ENCODE measurements at regions of chr12 and their contacts with region 1.

Region 1: DNA sequence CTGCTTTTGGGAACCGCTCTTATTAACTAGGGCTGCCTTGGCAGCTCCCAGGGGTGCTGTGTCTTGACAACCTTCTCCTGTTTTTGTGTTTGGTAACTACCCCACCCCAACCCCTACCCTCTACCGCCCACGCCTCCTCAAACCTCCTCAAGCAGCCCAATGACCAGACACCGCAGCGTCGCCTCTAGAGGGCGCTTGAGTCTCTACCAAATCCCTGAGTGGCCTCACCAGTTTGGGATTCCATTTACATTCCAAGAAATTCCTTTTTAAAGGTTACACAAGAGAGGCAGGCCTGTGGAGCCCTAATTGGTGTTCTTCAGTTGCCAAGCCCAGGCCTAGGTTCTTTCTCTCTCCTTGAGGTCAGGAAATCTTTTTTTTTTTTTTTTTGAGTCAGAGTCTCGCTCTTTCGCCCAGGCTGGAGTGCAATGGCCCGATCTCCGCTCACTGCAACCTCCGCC is 72.3 kb upstream of the USP44 start:
- DNase-seq: peak; percentile 84
- H3K4me3 ChIP-seq: no peak overlapping the region
- H3K27ac ChIP-seq: no peak overlapping the region
- H3K4me1 ChIP-seq: peaks cover 19% of the 10 kb centered on the region
- H3K27me3 ChIP-seq: no peaks in the 10 kb centered on the region
- CTCF ChIP-seq: peak; percentile 45 to 61 (median 57)
- POLR2A ChIP-seq: no peak

Region 2: GRCh38 chr12:95674631-95675030 is 51.0 kb after region 1 on chr12:
- intact Hi-C with region 1: no loop called
- DNase-seq: no peak
- H3K4me3 ChIP-seq: no peak overlapping the region
- H3K27ac ChIP-seq: no peak overlapping the region
- H3K4me1 ChIP-seq: peaks cover 10% of the 10 kb centered on the region
- H3K27me3 ChIP-seq: no peaks in the 10 kb centered on the region
- CTCF ChIP-seq: no peak
- POLR2A ChIP-seq: no peak

Region 3: DNA sequence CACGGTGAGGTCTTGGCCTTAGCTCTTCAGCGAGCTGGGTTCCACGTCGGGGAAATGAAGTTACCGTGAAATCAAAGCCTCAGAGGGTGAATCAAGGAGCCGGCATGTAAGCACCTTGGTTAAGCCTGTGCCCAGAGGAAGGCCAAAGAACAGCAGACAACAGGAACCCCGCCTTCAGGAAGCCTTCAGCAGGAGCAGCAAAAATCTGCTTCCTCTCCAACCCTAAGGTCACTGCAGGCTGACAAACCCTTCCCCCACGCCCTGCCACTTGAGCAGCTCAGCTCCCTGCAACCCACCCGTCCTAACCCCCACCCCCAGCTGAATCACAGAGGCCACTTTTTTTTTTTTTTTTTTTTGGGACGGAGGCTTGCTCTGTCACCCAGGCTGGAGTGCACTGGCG is 484.7 kb after region 1 on chr12:
- intact Hi-C with region 1: loop called (anchors 10 kb)
- DNase-seq: no peak
- H3K4me3 ChIP-seq: peak overlapping the region in 1 of 2 donors; percentile 39
- H3K27ac ChIP-seq: peak overlapping the region in 1 of 2 donors; percentile 45
- H3K4me1 ChIP-seq: no peaks in the 10 kb centered on the region
- H3K27me3 ChIP-seq: no peaks in the 10 kb centered on the region
- CTCF ChIP-seq: no peak
- POLR2A ChIP-seq: no peak